A673 (cell line): ENCODE measurements at regions of chr2 and their contacts with region 1.

Region 1: GRCh38 chr2:168118733-168119514 is 128.5 kb downstream of the STK39 start:
- DNase-seq: peak; percentile 83
- H3K4me3 ChIP-seq: no peak overlapping the region
- H3K27ac ChIP-seq: no peak overlapping the region
- H3K4me1 ChIP-seq: no peaks in the 10 kb centered on the region
- H3K27me3 ChIP-seq: no peaks in the 10 kb centered on the region
- CTCF ChIP-seq: peak; percentile 79

Region 2: GRCh38 chr2:166539340-166540162 is 1579.4 kb before region 1 on chr2:
- CTCF ChIA-PET with region 1: interaction called, 6 read pairs
- POLR2A ChIA-PET with region 1: no interaction called
- intact Hi-C with region 1: loop called (anchors 2 kb)
- DNase-seq: peak; percentile 84
- H3K4me3 ChIP-seq: no peak overlapping the region
- H3K27ac ChIP-seq: no peak overlapping the region
- H3K4me1 ChIP-seq: no peaks in the 10 kb centered on the region
- H3K27me3 ChIP-seq: no peaks in the 10 kb centered on the region
- CTCF ChIP-seq: peak; percentile 86

Region 3: GRCh38 chr2:166700079-166700478 is 1418.8 kb before region 1 on chr2:
- CTCF ChIA-PET with region 1: no interaction called
- POLR2A ChIA-PET with region 1: no interaction called
- intact Hi-C with region 1: loop called (anchors 2 kb)
- DNase-seq: peak; percentile 27
- H3K4me3 ChIP-seq: no peak overlapping the region
- H3K27ac ChIP-seq: no peak overlapping the region
- H3K4me1 ChIP-seq: no peaks in the 10 kb centered on the region
- H3K27me3 ChIP-seq: no peaks in the 10 kb centered on the region
- CTCF ChIP-seq: peak; percentile 47; the same call in 1 of the 2 replicates

Region 4: GRCh38 chr2:167264380-167264779 is 854.5 kb before region 1 on chr2:
- CTCF ChIA-PET with region 1: interaction called, 20 read pairs
- POLR2A ChIA-PET with region 1: no interaction called
- intact Hi-C with region 1: loop called (anchors 2 kb)
- DNase-seq: peak; percentile 49
- H3K4me3 ChIP-seq: no peak overlapping the region
- H3K27ac ChIP-seq: no peak overlapping the region
- H3K4me1 ChIP-seq: no peaks in the 10 kb centered on the region
- H3K27me3 ChIP-seq: no peaks in the 10 kb centered on the region
- CTCF ChIP-seq: peak; percentile 68

Region 5: GRCh38 chr2:167871286-167871685 is 247.6 kb before region 1 on chr2:
- CTCF ChIA-PET with region 1: no interaction called
- POLR2A ChIA-PET with region 1: no interaction called
- intact Hi-C with region 1: loop called (anchors 5 kb)
- DNase-seq: no peak
- H3K4me3 ChIP-seq: no peak overlapping the region
- H3K27ac ChIP-seq: no peak overlapping the region
- H3K4me1 ChIP-seq: no peaks in the 10 kb centered on the region
- H3K27me3 ChIP-seq: no peaks in the 10 kb centered on the region
- CTCF ChIP-seq: no peak

Region 6: GRCh38 chr2:167964650-167965413 is 154.1 kb before region 1 on chr2:
- CTCF ChIA-PET with region 1: interaction called, 4 read pairs
- POLR2A ChIA-PET with region 1: no interaction called
- intact Hi-C with region 1: loop called (anchors 2 kb)
- DNase-seq: peak; percentile 24
- H3K4me3 ChIP-seq: no peak overlapping the region
- H3K27ac ChIP-seq: no peak overlapping the region
- H3K4me1 ChIP-seq: no peaks in the 10 kb centered on the region
- H3K27me3 ChIP-seq: no peaks in the 10 kb centered on the region
- CTCF ChIP-seq: peak; percentile 51

Region 7: GRCh38 chr2:168064011-168064998 is 54.6 kb before region 1 on chr2:
- CTCF ChIA-PET with region 1: interaction called, 14 read pairs
- POLR2A ChIA-PET with region 1: no interaction called
- intact Hi-C with region 1: no loop called
- DNase-seq: no peak
- H3K4me3 ChIP-seq: no peak overlapping the region
- H3K27ac ChIP-seq: no peak overlapping the region
- H3K4me1 ChIP-seq: peaks cover 6% of the 10 kb centered on the region
- H3K27me3 ChIP-seq: no peaks in the 10 kb centered on the region
- CTCF ChIP-seq: no peak